ENCODE measurements at regions of chr7 and their contacts with region 1.

Region 1: GRCh38 chr7:107890962-107891635 is at the start of gene DLD:
- DNase-seq: peak; percentile 95
- H3K4me3 Mint-ChIP-seq: peak within 1 kb of the TSS; percentile 96
- H3K27ac Mint-ChIP-seq: peak within 1 kb of the TSS; percentile 98
- H3K4me1 Mint-ChIP-seq: peaks cover 42% of the 10 kb centered on the region
- H3K27me3 Mint-ChIP-seq: peaks cover 3% of the 10 kb centered on the region
- total RNA-seq, gene DLD: 54.1 to 60.5 TPM

Region 2: GRCh38 chr7:107879400-107880035 is 11.6 kb before region 1 on chr7:
- CTCF ChIA-PET with region 1: interaction called, 20 read pairs
- POLR2A ChIA-PET with region 1: no interaction called
- DNase-seq: peak; percentile 40
- H3K4me3 Mint-ChIP-seq: no peak overlapping the region
- H3K27ac Mint-ChIP-seq: no peak overlapping the region
- H3K4me1 Mint-ChIP-seq: peaks cover 29% of the 10 kb centered on the region
- H3K27me3 Mint-ChIP-seq: no peaks in the 10 kb centered on the region